CD14-positive monocyte (primary cell): ENCODE measurements at regions of chr3 and their contacts with region 1.

Region 1: GRCh38 chr3:15440891-15441290 is 13.5 kb downstream of the EAF1 start:
- DNase-seq: peak; percentile 81 to 95 (median 85)
- H3K4me3 ChIP-seq: no peak overlapping the region
- H3K4me3 Mint-ChIP-seq: peak overlapping the region in 1 of 2 donors; percentile 68
- H3K27ac ChIP-seq: peak overlapping the region; percentile 77 to 92
- H3K27ac Mint-ChIP-seq: peak overlapping the region; percentile 96 to 99 (median 98)
- H3K4me1 ChIP-seq: peaks cover 44 to 50% of the 10 kb centered on the region in 2 donors
- H3K4me1 Mint-ChIP-seq: peaks cover 59% of the 10 kb centered on the region
- H3K27me3 ChIP-seq: no peaks in the 10 kb centered on the region
- H3K27me3 Mint-ChIP-seq: peaks cover 0 to 1% (median 1%) of the 10 kb centered on the region in 3 donors
- CTCF ChIP-seq: no peak

Region 2: DNA sequence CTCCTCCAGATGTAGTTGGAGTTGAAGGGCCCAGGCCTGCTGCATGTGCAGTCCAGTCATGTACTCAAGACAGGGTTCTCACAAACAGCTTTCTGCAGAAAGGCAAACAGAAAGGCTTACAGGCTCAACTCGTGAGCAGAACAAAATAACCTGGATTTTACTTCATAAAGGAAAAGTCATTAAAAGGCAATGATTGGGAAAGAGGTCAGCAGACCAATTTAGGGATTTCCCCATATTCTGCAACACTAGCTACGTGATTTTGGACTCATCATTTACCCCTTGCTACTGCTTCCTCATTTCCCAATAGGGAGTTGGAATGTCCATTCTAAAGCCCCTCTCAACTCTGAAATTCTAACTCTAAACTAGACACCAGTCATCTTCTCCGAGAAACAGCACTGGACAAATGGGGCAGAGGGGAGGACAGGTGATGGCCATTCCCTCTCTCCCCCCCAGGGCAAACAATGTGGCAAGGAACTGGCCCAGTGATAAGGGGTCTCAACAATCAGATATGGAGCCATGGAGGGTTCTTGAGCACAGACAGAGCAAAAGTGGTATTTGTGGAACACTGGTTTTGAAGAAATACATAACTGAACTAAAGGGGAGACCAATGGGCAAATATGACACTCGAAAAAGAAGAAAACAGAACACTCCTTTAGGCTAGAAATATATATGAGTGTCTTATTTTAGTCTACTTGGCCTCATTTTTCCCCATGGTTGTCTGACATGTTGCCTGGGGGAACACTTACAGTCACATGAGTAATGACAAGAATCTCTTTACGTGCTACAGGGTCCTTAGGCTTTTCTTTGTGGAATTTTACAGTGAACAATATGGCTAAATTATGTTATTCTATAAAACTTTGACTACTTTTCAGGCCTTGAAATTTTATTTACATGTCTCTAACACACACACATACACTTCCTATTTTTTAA is 31.4 kb before region 1 on chr3:
- intact Hi-C with region 1: loop called in 1 of 2 experiments (anchors 2 kb)
- DNase-seq: peak; percentile 90 to 95 (median 90)
- H3K4me3 ChIP-seq: peak overlapping the region in 1 of 3 experiments; percentile 47
- H3K4me3 Mint-ChIP-seq: peak overlapping the region in 1 of 2 donors; percentile 71
- H3K27ac ChIP-seq: peak overlapping the region; percentile 86 to 93
- H3K27ac Mint-ChIP-seq: peak overlapping the region; percentile 92 to 99 (median 96)
- H3K4me1 ChIP-seq: peaks cover 22 to 24% of the 10 kb centered on the region in 2 donors
- H3K4me1 Mint-ChIP-seq: peaks cover 25% of the 10 kb centered on the region
- H3K27me3 ChIP-seq: no peaks in the 10 kb centered on the region
- H3K27me3 Mint-ChIP-seq: no peaks in the 10 kb centered on the region
- CTCF ChIP-seq: no peak

Region 3: DNA sequence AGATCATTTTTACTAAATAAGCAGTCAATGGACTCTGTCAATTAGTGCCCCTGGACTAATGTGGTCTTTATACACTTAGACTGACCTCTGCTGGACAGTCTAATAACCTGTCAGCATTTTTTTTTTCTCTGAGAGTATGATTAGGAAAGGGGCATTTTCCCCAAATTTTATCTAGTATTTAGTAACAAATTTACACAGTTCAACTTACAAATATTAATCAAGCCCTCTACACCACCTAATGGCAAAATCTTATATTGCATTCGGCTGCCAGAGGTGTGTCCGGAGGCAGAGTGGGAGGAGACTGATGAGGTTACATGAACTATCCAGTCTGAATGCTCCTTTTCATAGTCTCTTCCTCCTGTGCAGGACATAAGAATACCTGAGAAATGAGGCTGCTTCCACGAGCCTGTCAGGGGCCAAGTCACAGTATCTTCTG is 116.6 kb after region 1 on chr3:
- intact Hi-C with region 1: loop called in 1 of 2 experiments (anchors 10 kb)
- DNase-seq: peak; percentile 64 to 80 (median 68)
- H3K4me3 ChIP-seq: no peak overlapping the region
- H3K4me3 Mint-ChIP-seq: peak overlapping the region in 1 of 2 donors; percentile 30
- H3K27ac ChIP-seq: peak overlapping the region in 1 of 2 donors; percentile 91
- H3K27ac Mint-ChIP-seq: peak overlapping the region; percentile 92 to 98 (median 97)
- H3K4me1 ChIP-seq: peaks cover 30 to 33% of the 10 kb centered on the region in 2 donors
- H3K4me1 Mint-ChIP-seq: peaks cover 29% of the 10 kb centered on the region
- H3K27me3 ChIP-seq: no peaks in the 10 kb centered on the region
- H3K27me3 Mint-ChIP-seq: peaks cover 0 to 2% (median 0%) of the 10 kb centered on the region in 3 donors
- CTCF ChIP-seq: peak; percentile 92

Region 4: GRCh38 chr3:15694628-15695027 is 253.7 kb after region 1 on chr3:
- intact Hi-C with region 1: no loop called
- DNase-seq: no peak
- H3K4me3 ChIP-seq: no peak overlapping the region
- H3K4me3 Mint-ChIP-seq: no peak overlapping the region
- H3K27ac ChIP-seq: no peak overlapping the region
- H3K27ac Mint-ChIP-seq: no peak overlapping the region
- H3K4me1 ChIP-seq: no peaks in the 10 kb centered on the region
- H3K4me1 Mint-ChIP-seq: peaks cover 3% of the 10 kb centered on the region
- H3K27me3 ChIP-seq: no peaks in the 10 kb centered on the region
- H3K27me3 Mint-ChIP-seq: no peaks in the 10 kb centered on the region
- CTCF ChIP-seq: no peak